ENCODE measurements at regions of chr6 and their contacts with region 1.

Region 1: DNA sequence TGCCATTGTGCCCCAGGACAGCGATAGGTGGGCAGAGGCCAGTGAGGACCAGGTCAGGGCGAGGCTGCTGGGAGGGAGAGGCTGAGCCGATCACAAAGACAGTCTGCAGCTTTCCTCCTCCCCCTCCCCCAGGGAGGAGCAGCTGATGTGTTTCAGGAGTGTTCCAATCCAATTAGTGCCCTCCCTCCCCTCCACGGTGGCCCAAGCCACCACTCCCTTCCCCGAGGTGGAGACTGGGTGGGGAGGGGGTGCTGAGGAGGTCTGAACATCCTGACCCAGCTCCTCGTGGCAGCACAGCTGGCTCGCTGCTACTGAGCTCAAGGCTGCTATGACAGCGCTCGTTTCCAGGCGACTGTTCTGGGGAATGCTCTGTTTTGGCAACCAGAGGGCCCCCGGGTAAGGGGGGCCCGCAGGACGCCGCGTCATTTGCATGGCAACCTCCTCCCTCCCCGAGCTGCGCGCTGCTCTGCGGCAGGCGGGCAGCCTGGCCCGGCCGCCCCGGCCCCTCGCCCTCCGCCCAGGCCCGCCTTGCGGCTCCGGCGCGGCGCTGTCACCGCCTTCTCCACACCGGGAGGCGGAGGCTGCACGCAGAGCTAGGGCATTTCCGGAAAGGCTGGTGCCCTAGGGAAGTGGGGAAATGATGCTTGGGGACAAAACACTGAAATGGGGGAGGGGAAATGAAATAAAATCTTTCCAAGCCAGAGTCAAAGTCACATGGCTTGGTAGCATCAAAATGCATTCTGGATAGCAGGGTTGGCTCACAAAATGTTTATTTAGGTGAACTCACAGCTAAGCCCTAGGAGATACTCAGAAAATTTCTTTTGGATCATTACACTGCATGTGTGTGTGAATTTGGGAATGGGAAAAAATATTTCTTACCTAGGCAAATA is 67.4 kb upstream of the PIM1 start:
- DNase-seq: peak; percentile 81 to 86
- ATAC-seq: peak; percentile 67 to 70
- H3K4me3 ChIP-seq: peak overlapping the region; percentile 33 to 60 (median 49)
- H3K27ac ChIP-seq: peak overlapping the region; percentile 86 to 95 (median 90)
- H3K4me1 ChIP-seq: peaks cover 27 to 40% of the 10 kb centered on the region in 2 donors
- H3K27me3 ChIP-seq: no peaks in the 10 kb centered on the region
- CTCF ChIP-seq: peak in 1 of 5 experiments; percentile 10
- POLR2A ChIP-seq: peak; percentile 62 to 66

Region 2: GRCh38 chr6:37059344-37060206 is 42.9 kb before region 1 on chr6:
- in situ Hi-C with region 1: loop called in 1 of 4 experiments (anchors 5 kb)
- intact Hi-C with region 1: loop called (anchors 1 kb)
- DNase-seq: peak; percentile 40 to 63
- ATAC-seq: peak; percentile 42 to 48
- H3K4me3 ChIP-seq: no peak overlapping the region
- H3K27ac ChIP-seq: peak overlapping the region; percentile 86 to 89 (median 86)
- H3K4me1 ChIP-seq: peaks cover 31 to 34% of the 10 kb centered on the region in 2 donors
- H3K27me3 ChIP-seq: no peaks in the 10 kb centered on the region
- CTCF ChIP-seq: peak in 4 of 5 experiments; percentile 19 to 60 (median 32)
- POLR2A ChIP-seq: peak in 1 of 2 donors; percentile 41

Region 3: DNA sequence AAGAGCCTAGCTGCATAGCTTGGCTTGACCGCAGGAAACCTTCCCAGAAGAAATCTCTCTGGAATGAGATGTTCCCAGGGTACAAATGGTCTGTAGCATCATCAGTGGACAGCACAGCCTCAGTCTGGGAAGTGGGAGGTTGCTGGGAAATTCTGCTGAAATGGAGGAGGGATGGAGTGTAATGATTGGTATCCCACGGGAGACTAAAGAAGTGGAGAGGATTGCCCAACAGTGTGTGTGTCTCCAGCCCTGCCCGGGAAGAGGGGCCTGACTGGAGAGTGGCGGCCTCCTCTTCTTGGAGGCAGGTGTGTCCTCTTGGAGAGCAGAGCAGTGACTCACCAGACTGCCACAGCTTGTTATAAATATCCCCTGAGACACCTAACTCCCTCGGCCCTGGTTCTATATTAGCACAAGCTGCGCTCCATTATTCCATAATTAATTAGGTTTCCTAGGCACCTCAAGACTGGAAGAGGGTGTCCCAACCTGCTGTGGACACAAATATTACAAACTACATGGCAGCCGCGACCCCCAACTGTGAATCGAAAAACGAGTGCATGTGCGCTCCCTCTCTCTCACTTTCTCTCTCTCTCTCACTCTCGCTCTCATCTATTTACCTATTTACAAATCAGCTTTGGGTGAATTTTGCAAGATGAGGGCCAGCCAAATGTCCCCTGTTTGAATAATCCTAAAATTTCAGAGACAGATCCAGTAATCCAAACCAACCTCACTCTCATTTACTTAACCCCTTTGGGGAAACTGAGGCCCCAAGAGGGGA is 28.3 kb before region 1 on chr6:
- in situ Hi-C with region 1: no loop called
- intact Hi-C with region 1: loop called (anchors 2 kb)
- DNase-seq: peak; percentile 81 to 89
- ATAC-seq: peak; percentile 97
- H3K4me3 ChIP-seq: no peak overlapping the region
- H3K27ac ChIP-seq: peak overlapping the region; percentile 66 to 91 (median 81)
- H3K4me1 ChIP-seq: peaks cover 5 to 19% of the 10 kb centered on the region in 2 donors
- H3K27me3 ChIP-seq: no peaks in the 10 kb centered on the region
- CTCF ChIP-seq: no peak
- POLR2A ChIP-seq: peak in 1 of 2 donors; percentile 14